SK-N-SH (cell line): ENCODE measurements at regions of chr7 and their contacts with region 1.

Region 1: GRCh38 chr7:117127585-117128168 is 174.4 kb downstream of the ST7 start:
- DNase-seq: no peak
- H3K4me3 ChIP-seq: no peak overlapping the region
- H3K27ac ChIP-seq: peak overlapping the region in 1 of 2 experiments; percentile 94; a peak in 1 of 4 replicates
- H3K4me1 ChIP-seq: peaks cover 23 to 46% of the 10 kb centered on the region in 2 experiments
- H3K27me3 ChIP-seq: no peaks in the 10 kb centered on the region
- CTCF ChIP-seq: peak; percentile 98
- EP300 ChIP-seq: no peak
- RAD21 ChIP-seq: peak; percentile 84

Region 2: DNA sequence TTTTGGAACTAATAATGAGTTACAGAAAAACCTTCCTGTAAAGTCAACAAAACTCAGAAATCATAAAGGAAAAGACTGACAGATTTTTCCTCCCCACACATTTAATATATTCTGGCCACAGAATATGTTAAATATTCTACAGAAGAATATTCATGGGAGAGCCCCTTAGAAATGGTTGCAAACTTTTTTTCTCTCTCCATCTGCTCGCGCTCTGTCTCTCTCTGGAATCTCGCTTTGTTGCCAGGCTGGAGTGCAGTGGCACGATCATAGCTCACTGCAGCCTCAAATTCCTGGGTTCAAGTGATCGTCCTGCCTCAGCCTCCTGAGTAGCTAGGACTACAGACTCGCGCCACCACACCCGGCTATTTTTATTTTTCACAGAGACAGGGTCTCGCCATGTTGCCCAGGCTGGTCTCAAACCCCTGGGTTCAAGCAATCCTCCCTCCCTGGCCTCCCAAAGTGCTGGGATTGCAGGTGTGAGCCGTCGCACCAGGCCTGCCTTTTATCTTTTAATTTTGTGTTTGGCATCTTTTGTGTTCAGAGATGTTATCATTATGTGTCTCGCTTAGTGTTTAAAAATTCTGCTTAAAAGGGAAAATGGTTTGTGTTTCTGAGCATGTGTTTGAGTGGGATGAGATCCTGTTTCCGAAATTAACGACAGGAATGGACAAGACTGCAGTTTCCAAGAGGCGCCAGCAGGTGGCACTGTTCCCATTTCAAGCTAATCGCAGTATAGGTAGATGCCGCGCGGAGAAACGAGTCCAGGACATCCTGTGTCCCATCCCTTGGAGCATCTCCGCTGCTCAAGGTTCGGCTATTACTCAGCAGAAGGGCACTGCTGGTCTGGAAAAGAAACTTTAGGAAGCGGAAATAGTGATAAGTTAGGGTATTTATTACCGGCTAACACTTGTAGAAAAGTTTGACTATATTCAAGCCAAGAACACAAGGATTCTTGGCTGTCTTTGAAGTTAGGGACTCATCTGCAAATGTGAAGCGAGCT is 197.5 kb before region 1 on chr7:
- CTCF ChIA-PET with region 1: interaction called, 219 read pairs
- POLR2A ChIA-PET with region 1: no interaction called
- DNase-seq: peak; percentile 80
- H3K4me3 ChIP-seq: no peak overlapping the region
- H3K27ac ChIP-seq: no peak overlapping the region
- H3K4me1 ChIP-seq: no peaks in the 10 kb centered on the region
- H3K27me3 ChIP-seq: no peaks in the 10 kb centered on the region
- CTCF ChIP-seq: peak; percentile 100
- EP300 ChIP-seq: no peak
- RAD21 ChIP-seq: peak; percentile 96

Region 3: DNA sequence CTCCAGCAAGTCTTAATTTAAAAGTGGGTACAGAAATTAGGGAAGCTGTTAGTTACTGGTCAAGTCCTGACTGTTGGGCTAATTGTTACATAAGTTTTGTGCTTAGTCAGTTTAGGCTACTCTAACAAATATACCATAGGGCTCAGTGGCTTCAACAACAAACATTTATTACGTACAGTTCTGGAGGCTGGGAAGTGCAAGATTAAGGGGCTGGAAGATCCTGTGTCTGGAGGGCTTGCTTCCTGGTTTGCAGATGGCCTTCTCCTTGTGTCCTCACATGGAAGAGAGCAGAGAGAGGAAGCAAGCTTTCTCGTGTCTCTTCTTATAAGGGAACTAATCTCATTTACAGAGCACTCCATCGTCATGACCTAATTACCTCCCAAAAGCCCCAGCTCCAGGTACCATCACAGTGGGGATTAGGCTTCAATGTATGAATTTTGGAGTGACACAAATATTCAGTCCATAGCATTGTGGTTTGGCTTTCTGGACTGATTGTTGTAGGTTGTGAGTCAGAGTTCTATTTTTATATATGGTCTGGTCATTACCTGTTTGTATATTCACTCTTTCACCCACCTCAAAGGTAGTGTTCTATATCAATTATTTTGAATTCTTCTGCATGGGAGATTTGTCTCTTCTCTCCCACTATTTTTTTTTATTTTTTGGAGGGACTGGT is 157.3 kb before region 1 on chr7:
- CTCF ChIA-PET with region 1: interaction called, 15 read pairs
- POLR2A ChIA-PET with region 1: no interaction called
- DNase-seq: no peak
- H3K4me3 ChIP-seq: no peak overlapping the region
- H3K27ac ChIP-seq: no peak overlapping the region
- H3K4me1 ChIP-seq: peaks cover 0 to 6% of the 10 kb centered on the region in 2 experiments; a peak in 2 of 4 replicates
- H3K27me3 ChIP-seq: no peaks in the 10 kb centered on the region
- CTCF ChIP-seq: no peak
- EP300 ChIP-seq: no peak
- RAD21 ChIP-seq: no peak

Region 4: GRCh38 chr7:117014673-117015133 is 113.0 kb before region 1 on chr7:
- CTCF ChIA-PET with region 1: interaction called, 58 read pairs
- POLR2A ChIA-PET with region 1: interaction called, 3 read pairs
- DNase-seq: peak; percentile 66
- H3K4me3 ChIP-seq: peak overlapping the region; percentile 28 to 34; a peak in 3 of 4 replicates
- H3K27ac ChIP-seq: peak overlapping the region; percentile 30 to 79
- H3K4me1 ChIP-seq: peaks cover 20 to 23% of the 10 kb centered on the region in 2 experiments; a peak in 3 of 4 replicates
- H3K27me3 ChIP-seq: no peaks in the 10 kb centered on the region
- CTCF ChIP-seq: no peak
- EP300 ChIP-seq: peak in 1 of 2 experiments; percentile 27; a peak in 1 of 4 replicates
- RAD21 ChIP-seq: 0 out of 2 replicates have a peak, but pooled peaks have one; percentile 3

Region 5: GRCh38 chr7:117157241-117158209 is 29.8 kb after region 1 on chr7:
- CTCF ChIA-PET with region 1: interaction called, 39 read pairs
- POLR2A ChIA-PET with region 1: no interaction called
- DNase-seq: peak; percentile 48
- H3K4me3 ChIP-seq: 0 out of 4 replicates have a peak overlapping the region, but pooled peaks of 1 of the 2 experiments have one; percentile 18
- H3K27ac ChIP-seq: peak overlapping the region; percentile 87 to 88
- H3K4me1 ChIP-seq: peaks cover 11 to 29% of the 10 kb centered on the region in 2 experiments; a peak in 3 of 4 replicates
- H3K27me3 ChIP-seq: no peaks in the 10 kb centered on the region
- CTCF ChIP-seq: peak; percentile 62
- EP300 ChIP-seq: peak; percentile 94 to 99
- RAD21 ChIP-seq: peak; percentile 37; the same call in 1 of the 2 replicates